ENCODE measurements at regions of chr2 and their contacts with region 1.

Region 1: GRCh38 chr2:74198461-74199274 is at the start of gene MTHFD2:
- DNase-seq: peak; percentile 95
- CTCF ChIP-seq: peak; percentile 78

Region 2: DNA sequence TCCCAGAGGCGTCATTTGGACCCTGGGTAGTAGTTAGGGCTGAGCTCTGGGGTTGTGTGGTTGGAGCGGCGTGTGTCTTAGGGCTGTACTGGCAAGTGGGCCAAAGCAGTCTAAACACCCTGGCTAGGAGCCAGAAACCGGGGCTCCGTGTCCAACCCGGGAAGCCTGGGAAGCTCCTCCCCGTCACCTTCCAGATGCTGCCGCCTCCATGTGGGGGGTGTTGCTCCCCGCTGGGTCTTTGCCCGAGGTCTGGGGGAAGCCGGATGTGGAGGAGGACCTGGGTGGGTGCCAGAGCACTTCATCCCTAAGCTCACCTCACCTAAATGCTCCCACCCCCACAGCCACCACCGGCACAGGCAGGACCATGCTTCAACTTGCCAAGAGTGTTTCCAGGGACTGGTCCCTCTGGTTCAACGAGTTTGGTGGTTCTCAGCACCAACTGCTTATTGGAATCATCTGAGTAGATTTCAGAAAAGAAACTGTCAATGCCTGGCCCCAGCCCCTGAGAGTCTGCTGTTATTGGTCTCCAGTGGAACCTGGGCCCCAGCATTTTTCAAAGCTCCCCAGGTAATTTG is 188.5 kb before region 1 on chr2:
- CTCF ChIA-PET with region 1: no interaction called
- POLR2A ChIA-PET with region 1: no interaction called
- DNase-seq: no peak
- CTCF ChIP-seq: no peak

Region 3: DNA sequence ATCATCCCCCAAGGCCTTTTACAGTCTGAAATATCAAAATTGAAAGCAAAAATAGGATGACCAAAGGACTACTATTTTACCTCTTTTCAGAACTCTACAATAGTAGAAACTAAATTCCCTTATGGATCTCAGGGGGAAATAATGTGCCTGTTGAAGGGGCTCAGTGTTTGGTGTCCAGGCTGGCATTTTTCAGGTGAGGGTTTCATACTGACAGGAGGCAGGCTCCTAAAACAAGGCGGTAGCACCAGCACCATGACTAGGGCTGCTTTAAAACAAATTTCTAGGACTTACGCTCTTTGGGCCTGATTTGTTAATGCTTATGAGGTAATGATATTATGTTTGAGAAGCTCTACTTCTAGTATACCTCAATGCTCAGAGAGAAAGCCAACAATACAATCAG is 45.7 kb before region 1 on chr2:
- CTCF ChIA-PET with region 1: interaction called, 14 read pairs
- POLR2A ChIA-PET with region 1: no interaction called
- DNase-seq: no peak
- CTCF ChIP-seq: no peak

Region 4: GRCh38 chr2:74186038-74186437 is 12.6 kb before region 1 on chr2:
- CTCF ChIA-PET with region 1: interaction called, 75 read pairs
- POLR2A ChIA-PET with region 1: interaction called, 16 read pairs
- DNase-seq: peak; percentile 71
- CTCF ChIP-seq: no peak

Region 5: DNA sequence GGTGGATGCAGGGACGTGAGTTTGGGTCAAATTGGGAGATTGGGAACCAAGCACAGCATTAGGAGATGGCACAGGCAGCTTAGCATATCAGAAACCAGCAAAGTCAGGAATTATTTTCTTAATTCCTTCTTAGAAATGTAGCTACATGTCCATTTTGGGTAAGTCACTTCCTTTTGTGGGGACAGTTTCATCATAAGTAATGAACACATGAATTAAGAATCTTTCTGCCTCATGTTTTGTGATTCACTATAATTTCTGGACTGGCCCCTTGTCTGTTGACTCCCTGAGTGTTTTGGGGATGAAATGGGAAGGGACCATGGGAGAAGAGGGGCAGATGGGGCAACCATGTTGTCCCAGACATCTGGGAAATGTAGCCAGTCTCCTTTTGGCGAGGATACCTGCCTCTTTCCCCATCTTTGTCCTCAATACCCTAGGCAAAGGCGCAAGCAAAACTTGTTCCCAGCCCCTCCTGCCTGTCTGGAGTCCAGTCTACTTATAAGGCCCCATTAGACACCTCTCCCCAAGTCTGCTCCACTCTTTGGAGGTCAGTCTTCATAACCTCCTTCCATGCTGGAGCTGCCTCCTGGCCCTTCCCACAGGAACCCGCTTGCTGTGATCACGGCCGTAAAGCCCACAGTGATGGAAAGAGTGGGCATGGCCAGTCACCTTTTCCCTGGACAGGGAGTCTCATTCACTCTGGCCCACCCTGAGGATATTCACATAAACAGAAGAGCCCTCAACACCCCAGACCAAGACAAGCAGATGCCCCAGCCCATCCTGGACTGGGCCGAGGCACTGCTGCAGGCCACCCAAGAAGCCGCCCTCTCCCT is 25.5 kb after region 1 on chr2:
- CTCF ChIA-PET with region 1: no interaction called
- POLR2A ChIA-PET with region 1: no interaction called
- DNase-seq: no peak
- CTCF ChIP-seq: no peak

Measured in GM10248 (cell line).